CD4-positive, alpha-beta memory T cell (primary cell): ENCODE measurements at regions of chr9 and their contacts with region 1.

Region 1: DNA sequence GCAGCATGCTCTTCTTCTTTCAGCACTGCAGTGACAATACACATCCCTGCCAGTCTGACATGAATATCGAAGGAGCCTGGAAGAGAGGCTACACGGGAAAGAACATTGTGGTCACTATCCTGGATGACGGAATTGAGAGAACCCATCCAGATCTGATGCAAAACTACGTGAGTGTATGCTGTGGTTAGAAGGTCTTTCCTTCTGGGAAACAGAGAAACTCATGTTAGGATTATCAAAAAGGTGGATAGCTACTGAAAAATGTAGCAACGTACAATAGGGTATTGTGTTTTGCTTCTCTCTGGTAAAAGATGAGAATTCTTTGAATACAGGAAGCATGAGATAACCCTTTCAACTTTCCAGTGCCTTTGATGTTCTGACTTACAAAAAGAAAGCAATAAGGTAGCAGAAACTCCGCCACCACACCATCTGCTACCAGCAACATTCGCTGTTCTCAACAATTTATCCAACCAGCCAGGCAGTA is 133.3 kb downstream of the PCSK5 start:
- DNase-seq: peak; percentile 58 to 76 (median 69)
- H3K4me3 ChIP-seq: peak overlapping the region; percentile 9 to 36
- H3K4me3 Mint-ChIP-seq: peak overlapping the region; percentile 63 to 84 (median 78)
- H3K27ac ChIP-seq: peak overlapping the region; percentile 31
- H3K27ac Mint-ChIP-seq: peak overlapping the region; percentile 76 to 96 (median 87)
- H3K4me1 ChIP-seq: peaks cover 68% of the 10 kb centered on the region
- H3K4me1 Mint-ChIP-seq: peaks cover 58 to 93% (median 75%) of the 10 kb centered on the region in 4 donors
- H3K27me3 ChIP-seq: no peaks in the 10 kb centered on the region
- H3K27me3 Mint-ChIP-seq: no peaks in the 10 kb centered on the region

Region 2: DNA sequence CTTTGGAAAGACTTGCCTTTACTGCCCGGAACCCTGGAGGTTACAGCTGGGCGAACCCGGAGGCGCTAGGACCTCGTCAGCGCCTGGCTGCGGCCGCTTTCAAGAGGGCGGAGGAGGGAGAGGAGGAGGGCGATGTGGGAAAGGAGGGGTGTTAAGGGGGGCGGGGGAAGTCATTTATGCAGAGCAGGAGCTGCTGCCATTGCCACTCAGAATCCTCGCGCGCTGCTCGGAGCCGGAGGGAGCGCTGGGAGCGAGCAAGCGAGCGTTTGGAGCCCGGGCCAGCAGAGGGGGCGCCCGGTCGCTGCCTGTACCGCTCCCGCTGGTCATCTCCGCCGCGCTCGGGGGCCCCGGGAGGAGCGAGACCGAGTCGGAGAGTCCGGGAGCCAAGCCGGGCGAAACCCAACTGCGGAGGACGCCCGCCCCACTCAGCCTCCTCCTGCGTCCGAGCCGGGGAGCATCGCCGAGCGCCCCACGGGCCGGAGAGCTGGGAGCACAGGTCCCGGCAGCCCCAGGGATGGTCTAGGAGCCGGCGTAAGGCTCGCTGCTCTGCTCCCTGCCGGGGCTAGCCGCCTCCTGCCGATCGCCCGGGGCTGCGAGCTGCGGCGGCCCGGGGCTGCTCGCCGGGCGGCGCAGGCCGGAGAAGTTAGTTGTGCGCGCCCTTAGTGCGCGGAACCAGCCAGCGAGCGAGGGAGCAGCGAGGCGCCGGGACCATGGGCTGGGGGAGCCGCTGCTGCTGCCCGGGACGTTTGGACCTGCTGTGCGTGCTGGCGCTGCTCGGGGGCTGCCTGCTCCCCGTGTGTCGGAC is 133.1 kb before region 1 on chr9 and contains the start of gene PCSK5:
- CTCF ChIA-PET with region 1: interaction called, 4 read pairs
- POLR2A ChIA-PET with region 1: interaction called, 6 read pairs
- intact Hi-C with region 1: loop called (anchors 2 kb)
- DNase-seq: peak; percentile 81 to 91 (median 84)
- H3K4me3 ChIP-seq: peak within 1 kb of the TSS; percentile 58 to 79
- H3K4me3 Mint-ChIP-seq: peak within 1 kb of the TSS; percentile 93 to 98 (median 94)
- H3K27ac ChIP-seq: peak within 1 kb of the TSS; percentile 59
- H3K27ac Mint-ChIP-seq: peak within 1 kb of the TSS; percentile 76 to 94 (median 93)
- H3K4me1 ChIP-seq: peaks cover 24% of the 10 kb centered on the region
- H3K4me1 Mint-ChIP-seq: peaks cover 22 to 51% (median 37%) of the 10 kb centered on the region in 4 donors
- H3K27me3 ChIP-seq: no peaks in the 10 kb centered on the region
- H3K27me3 Mint-ChIP-seq: peaks cover 2 to 7% of the 10 kb centered on the region in 2 donors
- total RNA-seq, gene PCSK5: 7.9 to 8.4 TPM

Region 3: DNA sequence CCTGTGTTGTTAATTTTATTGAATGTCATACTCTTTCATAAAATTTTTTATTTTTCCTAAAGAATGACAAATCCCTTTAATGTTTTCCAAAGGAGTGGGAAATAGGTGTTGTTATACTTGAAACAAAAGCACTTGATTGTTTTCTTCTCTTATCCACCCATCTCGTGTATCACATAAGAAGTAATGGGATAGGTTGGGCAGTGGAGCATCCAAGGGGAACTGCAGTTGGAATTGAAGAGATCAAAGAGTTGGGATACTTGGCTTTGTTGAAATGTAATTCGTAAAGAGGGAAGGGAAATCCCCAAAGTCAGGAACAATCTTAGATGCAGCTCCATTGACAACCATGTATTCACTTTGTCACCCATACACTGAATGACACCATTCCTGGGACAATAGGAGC is 14.7 kb after region 1 on chr9:
- CTCF ChIA-PET with region 1: no interaction called
- POLR2A ChIA-PET with region 1: no interaction called
- intact Hi-C with region 1: no loop called
- DNase-seq: no peak
- H3K4me3 ChIP-seq: no peak overlapping the region
- H3K4me3 Mint-ChIP-seq: no peak overlapping the region
- H3K27ac ChIP-seq: no peak overlapping the region
- H3K27ac Mint-ChIP-seq: no peak overlapping the region
- H3K4me1 ChIP-seq: peaks cover under 1% of the 10 kb centered on the region
- H3K4me1 Mint-ChIP-seq: peaks cover 6 to 8% (median 6%) of the 10 kb centered on the region in 4 donors
- H3K27me3 ChIP-seq: no peaks in the 10 kb centered on the region
- H3K27me3 Mint-ChIP-seq: no peaks in the 10 kb centered on the region

Region 4: GRCh38 chr9:76092572-76092971 is 68.8 kb after region 1 on chr9:
- CTCF ChIA-PET with region 1: no interaction called
- POLR2A ChIA-PET with region 1: no interaction called
- intact Hi-C with region 1: loop called (anchors 10 kb)
- DNase-seq: no peak
- H3K4me3 ChIP-seq: no peak overlapping the region
- H3K4me3 Mint-ChIP-seq: no peak overlapping the region
- H3K27ac ChIP-seq: no peak overlapping the region
- H3K27ac Mint-ChIP-seq: no peak overlapping the region
- H3K4me1 ChIP-seq: no peaks in the 10 kb centered on the region
- H3K4me1 Mint-ChIP-seq: peaks cover 0 to 3% (median 0%) of the 10 kb centered on the region in 4 donors
- H3K27me3 ChIP-seq: no peaks in the 10 kb centered on the region
- H3K27me3 Mint-ChIP-seq: no peaks in the 10 kb centered on the region

Region 5: GRCh38 chr9:76177931-76178330 is 154.2 kb after region 1 on chr9:
- CTCF ChIA-PET with region 1: no interaction called
- POLR2A ChIA-PET with region 1: no interaction called
- intact Hi-C with region 1: loop called (anchors 10 kb)
- DNase-seq: no peak
- H3K4me3 ChIP-seq: no peak overlapping the region
- H3K4me3 Mint-ChIP-seq: no peak overlapping the region
- H3K27ac ChIP-seq: no peak overlapping the region
- H3K27ac Mint-ChIP-seq: no peak overlapping the region
- H3K4me1 ChIP-seq: no peaks in the 10 kb centered on the region
- H3K4me1 Mint-ChIP-seq: no peaks in the 10 kb centered on the region
- H3K27me3 ChIP-seq: no peaks in the 10 kb centered on the region
- H3K27me3 Mint-ChIP-seq: no peaks in the 10 kb centered on the region